Activated CD4-positive, alpha-beta memory T cell treated with anti-CD3 and anti-CD28 coated beads for 36 hours (primary cell): ENCODE measurements at regions of chr10 and their contacts with region 1.

Region 1: DNA sequence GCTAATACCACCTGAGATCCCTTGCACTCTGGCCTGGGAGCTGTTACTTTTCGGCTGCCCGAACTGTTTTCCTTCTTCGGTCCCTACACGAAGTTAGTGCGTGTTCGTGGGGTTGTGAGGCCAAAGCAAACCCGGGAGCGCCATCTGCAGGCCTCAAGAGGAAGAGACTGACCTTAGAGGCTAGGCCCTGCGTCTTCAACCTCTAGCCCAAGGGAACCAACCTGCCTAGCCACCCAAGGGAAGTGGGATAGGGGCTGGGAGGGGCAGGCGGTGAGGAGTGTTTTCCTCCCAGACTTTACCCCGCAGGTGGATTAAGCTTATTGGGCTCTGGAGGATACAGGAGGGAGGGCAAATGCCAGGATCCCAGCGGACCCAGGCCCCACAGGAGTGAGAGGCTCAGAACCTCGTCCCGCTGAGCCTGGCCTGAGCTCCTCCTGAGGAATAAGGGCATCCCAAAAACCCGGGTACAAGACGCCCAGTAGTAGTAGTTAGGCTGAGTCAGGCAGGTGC is 1.7 kb upstream of the PAX2 start:
- DNase-seq: peak; percentile 66
- H3K4me3 Mint-ChIP-seq: no peak overlapping the region
- H3K27ac Mint-ChIP-seq: no peak overlapping the region
- H3K4me1 Mint-ChIP-seq: peaks cover 39% of the 10 kb centered on the region
- H3K27me3 Mint-ChIP-seq: peaks cover 80% of the 10 kb centered on the region

Region 2: DNA sequence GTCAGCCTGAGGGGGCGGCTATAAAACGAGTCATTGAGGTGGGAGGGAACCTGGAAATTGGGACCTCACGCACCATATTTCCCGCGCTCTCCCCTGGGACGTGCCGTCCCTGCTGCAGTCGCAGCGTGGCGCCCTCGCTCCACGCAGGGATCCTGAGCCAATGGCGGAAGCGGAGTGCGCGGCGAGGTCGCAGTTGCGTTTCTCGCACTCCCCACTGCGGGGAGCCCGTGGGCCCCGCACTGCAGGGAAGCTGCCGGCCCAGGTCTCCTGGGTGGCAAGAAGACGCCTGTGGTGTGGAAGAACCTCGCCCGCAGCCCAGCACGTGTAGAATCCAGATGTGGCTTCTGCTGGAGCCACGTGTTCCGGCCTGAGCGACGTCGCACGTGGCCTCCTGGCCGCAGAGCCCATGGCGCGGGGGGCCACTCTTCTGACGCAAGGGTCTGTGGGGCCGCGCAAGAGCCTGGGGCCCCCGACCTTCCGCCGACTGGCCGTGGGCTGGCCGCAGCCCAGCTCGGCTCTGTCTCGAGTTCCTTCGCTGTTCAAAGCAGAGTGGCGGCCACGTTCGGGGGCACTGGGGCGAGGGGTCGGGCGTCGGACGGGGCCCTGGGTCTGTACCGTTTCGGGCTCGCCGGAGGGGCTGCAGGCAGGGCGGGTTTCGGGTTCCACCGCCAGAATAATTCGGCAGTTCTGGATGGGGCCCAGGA is 181.5 kb before region 1 on chr10:
- CTCF ChIA-PET with region 1: interaction called, 56 read pairs
- POLR2A ChIA-PET with region 1: no interaction called
- intact Hi-C with region 1: loop called (anchors 1 kb)
- DNase-seq: peak; percentile 86
- H3K4me3 Mint-ChIP-seq: no peak overlapping the region
- H3K27ac Mint-ChIP-seq: no peak overlapping the region
- H3K4me1 Mint-ChIP-seq: peaks cover 10% of the 10 kb centered on the region
- H3K27me3 Mint-ChIP-seq: peaks cover 29% of the 10 kb centered on the region

Region 3: GRCh38 chr10:100670828-100671479 is 72.7 kb before region 1 on chr10:
- CTCF ChIA-PET with region 1: interaction called, 42 read pairs
- POLR2A ChIA-PET with region 1: no interaction called
- intact Hi-C with region 1: loop called (anchors 2 kb)
- DNase-seq: peak; percentile 75
- H3K4me3 Mint-ChIP-seq: no peak overlapping the region
- H3K27ac Mint-ChIP-seq: no peak overlapping the region
- H3K4me1 Mint-ChIP-seq: peaks cover 3% of the 10 kb centered on the region
- H3K27me3 Mint-ChIP-seq: peaks cover 56% of the 10 kb centered on the region

Region 4: DNA sequence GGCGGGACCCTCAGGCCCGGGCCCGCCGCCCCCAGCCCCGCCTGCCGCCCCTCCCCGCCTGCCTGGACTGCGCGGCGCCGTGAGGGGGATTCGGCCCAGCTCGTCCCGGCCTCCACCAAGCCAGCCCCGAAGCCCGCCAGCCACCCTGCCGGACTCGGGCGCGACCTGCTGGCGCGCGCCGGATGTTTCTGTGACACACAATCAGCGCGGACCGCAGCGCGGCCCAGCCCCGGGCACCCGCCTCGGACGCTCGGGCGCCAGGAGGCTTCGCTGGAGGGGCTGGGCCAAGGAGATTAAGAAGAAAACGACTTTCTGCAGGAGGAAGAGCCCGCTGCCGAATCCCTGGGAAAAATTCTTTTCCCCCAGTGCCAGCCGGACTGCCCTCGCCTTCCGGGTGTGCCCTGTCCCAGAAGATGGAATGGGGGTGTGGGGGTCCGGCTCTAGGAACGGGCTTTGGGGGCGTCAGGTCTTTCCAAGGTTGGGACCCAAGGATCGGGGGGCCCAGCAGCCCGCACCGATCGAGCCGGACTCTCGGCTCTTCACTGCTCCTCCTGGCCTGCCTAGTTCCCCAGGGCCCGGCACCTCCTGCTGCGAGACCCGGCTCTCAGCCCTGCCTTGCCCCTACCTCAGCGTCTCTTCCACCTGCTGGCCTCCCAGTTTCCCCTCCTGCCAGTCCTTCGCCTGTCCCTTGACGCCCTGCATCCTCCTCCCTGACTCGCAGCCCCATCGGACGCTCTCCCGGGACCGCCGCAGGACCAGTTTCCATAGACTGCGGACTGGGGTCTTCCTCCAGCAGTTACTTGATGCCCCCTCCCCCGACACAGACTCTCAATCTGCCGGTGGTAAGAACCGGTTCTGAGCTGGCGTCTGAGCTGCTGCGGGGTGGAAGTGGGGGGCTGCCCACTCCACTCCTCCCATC is 84.4 kb after region 1 on chr10:
- CTCF ChIA-PET with region 1: interaction called, 12 read pairs
- POLR2A ChIA-PET with region 1: no interaction called
- intact Hi-C with region 1: loop called (anchors 5 kb)
- DNase-seq: peak; percentile 57
- H3K4me3 Mint-ChIP-seq: peak overlapping the region; percentile 67
- H3K27ac Mint-ChIP-seq: no peak overlapping the region
- H3K4me1 Mint-ChIP-seq: peaks cover 21% of the 10 kb centered on the region
- H3K27me3 Mint-ChIP-seq: peaks cover 72% of the 10 kb centered on the region

Region 5: DNA sequence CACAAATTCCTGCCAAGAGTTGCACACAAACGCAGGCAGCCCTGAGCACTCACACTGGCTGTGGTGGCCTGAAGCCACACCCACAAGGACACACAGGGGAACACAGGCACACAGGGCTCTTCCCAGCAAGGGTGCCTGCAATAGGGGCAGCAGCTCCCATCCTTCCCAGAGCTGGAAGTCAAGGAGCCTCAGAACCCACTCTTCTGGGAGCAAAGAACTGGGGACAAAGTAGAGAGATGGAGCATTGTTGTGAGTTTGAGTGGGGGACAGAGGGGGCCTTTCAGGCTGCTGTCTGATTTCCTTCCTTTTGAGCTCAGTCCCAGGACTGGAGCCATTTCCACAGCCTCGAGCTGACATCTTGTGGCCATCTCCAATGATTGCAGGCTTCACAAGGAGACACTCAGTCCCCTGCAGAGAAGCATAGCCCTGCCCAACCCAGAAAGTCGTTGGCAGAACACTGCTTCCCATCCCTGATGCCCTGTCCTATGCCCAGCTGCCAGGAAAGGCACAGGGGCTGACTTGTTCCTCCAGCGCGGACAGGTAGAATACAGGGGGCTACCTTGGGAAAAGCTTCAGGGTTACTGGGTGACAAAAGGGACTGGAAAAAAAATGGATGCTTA is 134.7 kb after region 1 on chr10:
- CTCF ChIA-PET with region 1: interaction called, 38 read pairs
- POLR2A ChIA-PET with region 1: no interaction called
- intact Hi-C with region 1: loop called (anchors 5 kb)
- DNase-seq: peak; percentile 60
- H3K4me3 Mint-ChIP-seq: no peak overlapping the region
- H3K27ac Mint-ChIP-seq: no peak overlapping the region
- H3K4me1 Mint-ChIP-seq: no peaks in the 10 kb centered on the region
- H3K27me3 Mint-ChIP-seq: peaks cover 12% of the 10 kb centered on the region

Region 6: GRCh38 chr10:101155896-101156295 is 412.2 kb after region 1 on chr10:
- CTCF ChIA-PET with region 1: no interaction called
- POLR2A ChIA-PET with region 1: no interaction called
- intact Hi-C with region 1: no loop called
- DNase-seq: no peak
- H3K4me3 Mint-ChIP-seq: no peak overlapping the region
- H3K27ac Mint-ChIP-seq: no peak overlapping the region
- H3K4me1 Mint-ChIP-seq: no peaks in the 10 kb centered on the region
- H3K27me3 Mint-ChIP-seq: peaks cover 41% of the 10 kb centered on the region

Region 7: GRCh38 chr10:101228153-101228973 is 484.7 kb after region 1 on chr10:
- CTCF ChIA-PET with region 1: no interaction called
- POLR2A ChIA-PET with region 1: no interaction called
- intact Hi-C with region 1: loop called (anchors 10 kb)
- DNase-seq: no peak
- H3K4me3 Mint-ChIP-seq: peak overlapping the region; percentile 3
- H3K27ac Mint-ChIP-seq: no peak overlapping the region
- H3K4me1 Mint-ChIP-seq: peaks cover 35% of the 10 kb centered on the region
- H3K27me3 Mint-ChIP-seq: peaks cover 68% of the 10 kb centered on the region